ENCODE measurements at regions of chr16 and their contacts with region 1.

Region 1: GRCh38 chr16:19521471-19522396 is at the start of gene GDE1:
- DNase-seq: peak; percentile 91
- H3K4me3 Mint-ChIP-seq: peak within 1 kb of the TSS; percentile 91
- H3K27ac Mint-ChIP-seq: peak within 1 kb of the TSS; percentile 91
- H3K4me1 Mint-ChIP-seq: peaks cover 56% of the 10 kb centered on the region
- H3K27me3 Mint-ChIP-seq: no peaks in the 10 kb centered on the region
- total RNA-seq, gene GDE1: 24.1 and 29.5 TPM in 2 replicates

Region 2: DNA sequence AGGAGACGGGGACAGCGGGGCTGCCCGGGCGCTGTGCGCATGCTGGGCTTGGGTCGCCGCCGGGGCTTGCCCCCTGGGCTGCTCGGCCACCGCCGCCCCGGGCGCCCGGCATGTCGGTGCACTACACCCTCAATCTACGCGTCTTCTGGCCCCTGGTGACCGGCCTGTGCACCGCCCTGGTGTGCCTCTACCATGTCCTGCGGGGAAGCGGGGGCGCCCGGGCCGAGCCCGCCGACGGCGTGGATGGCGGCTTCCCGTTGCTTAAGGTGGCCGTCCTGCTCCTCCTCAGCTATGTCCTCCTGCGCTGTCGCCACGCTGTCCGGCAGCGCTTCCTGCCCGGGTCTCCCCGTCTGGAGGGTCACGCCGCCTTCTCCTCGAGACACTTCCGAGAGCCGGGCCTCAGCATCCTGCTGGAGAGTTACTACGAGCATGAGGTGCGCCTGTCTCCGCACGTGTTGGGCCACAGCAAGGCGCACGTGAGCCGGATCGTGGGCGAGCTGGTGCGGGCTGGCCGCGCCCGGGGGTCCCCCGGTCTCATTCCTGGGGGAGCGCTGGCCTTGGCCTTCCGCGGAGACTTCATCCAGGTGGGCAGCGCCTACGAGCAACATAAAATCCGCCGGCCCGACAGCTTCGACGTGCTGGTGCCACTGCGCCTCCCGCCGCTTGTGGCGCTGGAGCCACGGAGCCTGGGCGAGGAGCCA is 407.2 kb before region 1 on chr16:
- intact Hi-C with region 1: loop called (anchors 5 kb)
- DNase-seq: no peak
- H3K4me3 Mint-ChIP-seq: peak overlapping the region; percentile 82
- H3K27ac Mint-ChIP-seq: peak overlapping the region; percentile 75
- H3K4me1 Mint-ChIP-seq: peaks cover 37% of the 10 kb centered on the region
- H3K27me3 Mint-ChIP-seq: peaks cover 19% of the 10 kb centered on the region

Region 3: DNA sequence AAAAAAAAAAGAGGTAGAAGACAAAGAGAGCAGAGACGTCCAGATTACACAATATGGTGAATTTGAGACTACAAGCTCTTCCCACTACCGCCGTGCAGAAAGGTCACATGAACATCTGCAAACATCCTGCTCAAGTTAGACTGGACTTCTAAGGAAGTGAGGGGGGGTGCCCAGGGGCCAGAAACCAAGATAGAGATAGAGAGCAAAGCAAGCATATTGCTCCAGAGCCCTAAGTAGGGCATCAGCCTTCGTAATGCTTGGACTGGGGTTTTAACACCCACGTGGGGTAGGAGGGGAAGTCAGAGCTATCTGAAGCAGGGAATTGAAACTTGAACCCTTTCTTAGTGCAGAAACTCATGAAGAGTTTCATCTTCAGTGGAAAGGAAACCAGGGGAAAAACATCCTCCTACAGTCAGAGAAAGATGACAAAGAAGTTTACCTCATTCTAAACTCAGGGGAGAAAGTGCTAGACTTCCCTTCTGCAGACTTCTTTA is 227.5 kb before region 1 on chr16:
- intact Hi-C with region 1: loop called (anchors 2 kb)
- DNase-seq: peak; percentile 3
- H3K4me3 Mint-ChIP-seq: peak overlapping the region; percentile 37
- H3K27ac Mint-ChIP-seq: peak overlapping the region; percentile 82
- H3K4me1 Mint-ChIP-seq: peaks cover 16% of the 10 kb centered on the region
- H3K27me3 Mint-ChIP-seq: peaks cover 3% of the 10 kb centered on the region

Region 4: DNA sequence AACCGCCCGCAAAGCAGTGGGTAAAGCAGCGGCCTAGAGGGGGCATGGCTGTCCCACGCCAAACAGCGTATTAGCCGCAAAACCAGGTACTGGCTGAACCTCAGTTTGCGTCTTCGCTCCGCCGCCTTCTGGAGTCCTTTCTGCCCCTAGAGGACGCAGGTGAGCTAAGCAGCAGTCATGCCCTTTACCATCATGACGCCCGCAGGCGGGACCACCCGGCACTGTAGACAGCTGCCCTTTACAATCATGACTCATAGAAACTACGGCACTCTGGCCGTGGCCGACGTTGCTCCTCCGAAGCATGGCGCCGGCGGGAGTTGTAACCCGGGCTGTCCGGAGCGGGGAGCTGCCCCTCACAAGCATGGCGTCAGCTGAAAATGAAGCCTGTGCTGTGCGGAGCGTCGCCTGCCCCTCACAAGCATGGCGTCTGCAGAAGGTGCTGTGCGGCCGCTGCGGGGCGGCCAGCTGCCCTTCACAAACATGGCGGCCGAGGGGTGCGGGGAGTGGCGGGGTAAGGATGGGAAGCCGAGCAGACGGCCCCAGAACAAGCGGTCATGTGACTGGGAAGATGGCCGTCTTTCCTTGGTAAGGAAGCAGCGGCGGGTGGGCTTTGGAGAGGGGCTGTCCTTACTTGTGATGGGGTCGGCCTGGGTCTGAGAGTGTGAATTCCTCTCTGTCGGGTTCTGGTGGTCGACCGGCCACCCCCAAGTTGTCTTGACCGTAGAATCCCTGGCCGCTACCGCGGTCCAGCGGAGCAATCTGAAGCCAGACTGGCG is 33.6 kb after region 1 on chr16 and contains the start of gene VPS35L:
- intact Hi-C with region 1: loop called (anchors 1 kb)
- DNase-seq: peak; percentile 93
- H3K4me3 Mint-ChIP-seq: peak within 1 kb of the TSS; percentile 93
- H3K27ac Mint-ChIP-seq: peak within 1 kb of the TSS; percentile 93
- H3K4me1 Mint-ChIP-seq: peaks cover 14% of the 10 kb centered on the region
- H3K27me3 Mint-ChIP-seq: no peaks in the 10 kb centered on the region
- total RNA-seq, gene VPS35L: 36.2 and 37.4 TPM in 2 replicates

Region 5: GRCh38 chr16:19886073-19886941 is 364.6 kb after region 1 on chr16:
- intact Hi-C with region 1: loop called (anchors 1 kb)
- DNase-seq: peak; percentile 71
- H3K4me3 Mint-ChIP-seq: peak overlapping the region; percentile 73
- H3K27ac Mint-ChIP-seq: peak overlapping the region; percentile 50
- H3K4me1 Mint-ChIP-seq: peaks cover 16% of the 10 kb centered on the region
- H3K27me3 Mint-ChIP-seq: peaks cover 34% of the 10 kb centered on the region

Measured in activated T-helper 1 cell treated with anti-CD3 and anti-CD28 coated beads, Interleukin-12 subunit alpha, Interleukin-12 subunit beta, Interleukin-2, Interleukin-4 antibody, amounts not matched to agents 30 ng/mL and 10 ng/mL and 1 ng/mL, durations not matched to agents 14 hours and 24 hours and 36 hours (primary cell).